ENCODE measurements at regions of chr9 and their contacts with region 1.

Region 1: GRCh38 chr9:35116898-35117551 is 1.4 kb upstream of the ATOSB start:
- DNase-seq: peak; percentile 95
- H3K4me3 ChIP-seq: peak overlapping the region; percentile 38
- H3K27ac ChIP-seq: peak overlapping the region; percentile 91
- H3K4me1 ChIP-seq: peaks cover 6% of the 10 kb centered on the region
- H3K27me3 ChIP-seq: no peaks in the 10 kb centered on the region
- CTCF ChIP-seq: peak; percentile 94

Region 2: DNA sequence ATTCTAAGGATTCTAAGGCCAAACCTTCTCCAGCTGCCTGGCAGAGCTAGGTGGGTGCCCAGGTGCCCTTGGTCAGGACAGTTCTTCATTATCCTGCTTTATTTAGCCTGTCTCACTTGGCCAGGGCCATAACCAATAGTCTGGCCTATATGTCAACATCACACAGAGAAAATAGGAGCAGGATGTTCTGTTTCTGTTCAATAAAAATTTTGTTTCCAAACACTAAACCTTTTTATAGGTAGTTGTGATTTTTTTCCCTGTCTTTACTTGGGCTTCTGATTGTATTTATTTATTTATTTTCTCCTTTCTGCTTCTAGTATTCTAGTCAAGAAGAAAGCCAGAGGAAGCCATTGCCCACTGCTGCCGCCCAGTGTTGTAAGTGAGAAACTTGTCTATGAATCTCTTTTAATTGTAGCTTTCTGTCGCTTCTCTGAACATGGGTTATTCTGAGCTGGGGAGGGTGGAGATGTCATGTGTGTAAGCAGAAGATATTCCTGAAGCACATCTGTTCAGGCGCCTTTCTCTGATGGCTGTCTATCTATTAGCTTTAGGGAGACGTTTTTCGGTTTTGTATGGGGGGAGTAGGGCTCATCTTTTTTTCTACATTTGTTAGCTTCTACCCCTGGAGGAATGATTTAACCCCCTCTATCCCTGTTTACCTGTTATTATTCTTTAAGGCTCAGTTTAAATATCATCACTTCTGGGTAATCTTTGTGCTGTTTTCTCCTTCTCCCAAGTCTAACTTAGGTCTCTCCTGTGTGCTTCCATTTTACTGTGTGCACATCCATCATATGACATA is 141.8 kb after region 1 on chr9:
- intact Hi-C with region 1: loop called (anchors 2 kb)
- DNase-seq: peak; percentile 78
- H3K4me3 ChIP-seq: no peak overlapping the region
- H3K27ac ChIP-seq: peak overlapping the region; percentile 24
- H3K4me1 ChIP-seq: no peaks in the 10 kb centered on the region
- H3K27me3 ChIP-seq: no peaks in the 10 kb centered on the region
- CTCF ChIP-seq: peak; percentile 64

Region 3: DNA sequence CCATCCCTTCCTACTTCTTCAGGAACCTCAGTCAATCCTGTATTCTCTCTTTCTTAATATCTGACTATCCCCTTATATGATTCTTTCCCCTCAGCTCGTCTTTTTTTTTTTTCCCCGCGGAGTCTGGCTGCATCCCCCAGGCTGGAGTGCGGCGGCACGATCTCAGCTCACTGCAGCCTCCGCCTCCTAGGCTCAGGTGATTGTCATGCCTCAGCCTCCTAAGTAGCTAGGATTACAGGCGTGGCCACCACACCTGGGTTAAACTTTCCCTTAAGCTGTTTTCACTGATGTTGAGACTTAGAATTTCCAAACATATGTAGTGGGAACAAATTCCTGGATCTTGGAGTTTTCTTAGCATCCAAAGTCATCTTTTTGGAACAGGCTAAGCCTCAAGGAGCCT is 359.6 kb after region 1 on chr9:
- intact Hi-C with region 1: loop called (anchors 2 kb)
- DNase-seq: no peak
- H3K4me3 ChIP-seq: no peak overlapping the region
- H3K27ac ChIP-seq: no peak overlapping the region
- H3K4me1 ChIP-seq: no peaks in the 10 kb centered on the region
- H3K27me3 ChIP-seq: no peaks in the 10 kb centered on the region
- CTCF ChIP-seq: no peak

Measured in colonic mucosa (tissue), 4 donors.